ENCODE measurements at regions of chr9 and their contacts with region 1.

Region 1: DNA sequence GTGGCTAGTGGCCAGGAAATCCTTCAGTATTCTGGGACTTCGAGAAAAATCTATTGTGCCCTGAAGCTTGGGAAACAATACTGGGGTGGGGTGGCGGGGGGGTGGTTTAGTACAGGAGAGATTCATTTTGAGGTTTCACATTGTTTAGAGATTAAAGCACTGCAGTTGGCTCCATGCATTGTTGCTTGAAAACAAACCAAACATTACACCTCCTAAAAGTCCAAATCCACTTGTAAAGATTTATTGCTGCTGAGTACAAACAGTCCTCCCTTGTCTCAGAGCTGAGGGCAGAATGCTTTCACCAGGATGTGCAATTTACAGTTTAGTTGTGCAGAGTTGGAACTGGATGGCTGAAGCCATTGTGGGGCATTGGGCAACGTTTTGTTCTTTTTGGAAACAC is 49.4 kb downstream of the GGTA1 start:
- DNase-seq: no peak
- H3K4me3 ChIP-seq: no peak overlapping the region
- CTCF ChIP-seq: no peak

Region 2: GRCh38 chr9:120875954-120876841 is 574.0 kb before region 1 on chr9:
- CTCF ChIA-PET with region 1: no interaction called
- POLR2A ChIA-PET with region 1: no interaction called
- DNase-seq: peak; percentile 19
- H3K4me3 ChIP-seq: peak overlapping the region; percentile 67
- CTCF ChIP-seq: peak; percentile 15

Region 3: GRCh38 chr9:121439711-121440664 is 10.3 kb before region 1 on chr9:
- CTCF ChIA-PET with region 1: interaction called, 16 read pairs
- POLR2A ChIA-PET with region 1: no interaction called
- DNase-seq: no peak
- H3K4me3 ChIP-seq: no peak overlapping the region
- CTCF ChIP-seq: no peak

Region 4: DNA sequence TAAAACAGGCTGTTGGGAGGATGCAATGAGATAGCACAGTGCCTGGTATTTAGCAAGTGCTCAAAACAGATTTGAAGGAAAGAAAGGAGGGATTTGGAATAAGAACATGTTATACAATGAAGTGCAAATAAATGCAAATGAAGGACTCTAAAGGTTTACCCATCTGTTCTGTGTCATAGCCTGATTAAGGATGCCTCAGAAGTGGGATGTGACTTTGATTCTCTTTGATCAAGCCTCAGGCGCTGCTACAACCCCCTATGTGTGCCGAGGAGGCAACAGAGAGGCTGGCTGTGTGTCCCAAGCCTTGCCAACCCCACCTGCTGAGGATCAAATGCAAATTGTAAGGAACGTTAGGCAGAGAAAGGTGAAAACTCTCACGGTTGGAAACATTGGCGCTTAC is 22.2 kb after region 1 on chr9:
- CTCF ChIA-PET with region 1: no interaction called
- POLR2A ChIA-PET with region 1: no interaction called
- DNase-seq: no peak
- H3K4me3 ChIP-seq: no peak overlapping the region
- CTCF ChIP-seq: no peak

Measured in AG04449 (cell line).